Activated CD4-positive, alpha-beta T cell treated with anti-CD3 and anti-CD28 coated beads for 36 hours (primary cell): ENCODE measurements at regions of chr9 and their contacts with region 1.

Region 1: DNA sequence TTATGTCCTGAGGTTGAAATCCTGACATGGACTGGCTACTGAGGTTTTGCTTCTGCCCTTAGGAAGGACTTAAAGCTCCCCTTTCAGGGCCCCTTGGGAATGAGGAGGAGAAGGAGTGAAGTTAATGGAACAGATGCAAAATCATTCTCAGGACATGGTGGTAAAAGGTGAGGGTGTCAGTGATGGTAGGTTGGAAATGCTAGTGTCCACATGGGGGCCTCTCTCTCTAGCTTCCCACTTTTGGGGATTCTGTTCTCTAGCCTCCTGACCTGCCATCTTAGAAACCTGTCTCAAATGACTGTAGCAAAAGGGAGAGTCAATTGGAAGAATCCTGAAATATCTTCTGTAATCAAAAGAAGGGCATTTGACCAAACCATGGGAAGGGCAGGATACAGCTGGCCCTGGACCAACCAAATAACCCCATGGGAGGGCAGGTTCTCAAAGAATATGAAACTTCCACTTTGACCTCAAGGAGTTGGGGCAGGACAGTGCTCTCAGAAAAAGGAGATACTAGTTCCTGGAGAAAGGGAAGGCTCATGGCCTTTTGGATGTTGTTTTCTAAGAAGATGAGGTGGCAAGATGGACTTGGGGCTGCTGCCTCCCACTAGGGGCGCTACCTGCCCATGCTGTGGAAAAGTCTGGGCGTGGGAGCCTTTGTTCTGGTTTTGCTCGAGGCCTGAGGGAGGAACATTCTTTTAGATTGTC is 21.2 kb upstream of the MLANA start:
- DNase-seq: peak; percentile 61
- ATAC-seq: peak; percentile 49
- H3K4me3 Mint-ChIP-seq: no peak overlapping the region
- H3K27ac Mint-ChIP-seq: peak overlapping the region; percentile 25
- H3K4me1 Mint-ChIP-seq: peaks cover 4% of the 10 kb centered on the region
- H3K27me3 Mint-ChIP-seq: no peaks in the 10 kb centered on the region

Region 2: DNA sequence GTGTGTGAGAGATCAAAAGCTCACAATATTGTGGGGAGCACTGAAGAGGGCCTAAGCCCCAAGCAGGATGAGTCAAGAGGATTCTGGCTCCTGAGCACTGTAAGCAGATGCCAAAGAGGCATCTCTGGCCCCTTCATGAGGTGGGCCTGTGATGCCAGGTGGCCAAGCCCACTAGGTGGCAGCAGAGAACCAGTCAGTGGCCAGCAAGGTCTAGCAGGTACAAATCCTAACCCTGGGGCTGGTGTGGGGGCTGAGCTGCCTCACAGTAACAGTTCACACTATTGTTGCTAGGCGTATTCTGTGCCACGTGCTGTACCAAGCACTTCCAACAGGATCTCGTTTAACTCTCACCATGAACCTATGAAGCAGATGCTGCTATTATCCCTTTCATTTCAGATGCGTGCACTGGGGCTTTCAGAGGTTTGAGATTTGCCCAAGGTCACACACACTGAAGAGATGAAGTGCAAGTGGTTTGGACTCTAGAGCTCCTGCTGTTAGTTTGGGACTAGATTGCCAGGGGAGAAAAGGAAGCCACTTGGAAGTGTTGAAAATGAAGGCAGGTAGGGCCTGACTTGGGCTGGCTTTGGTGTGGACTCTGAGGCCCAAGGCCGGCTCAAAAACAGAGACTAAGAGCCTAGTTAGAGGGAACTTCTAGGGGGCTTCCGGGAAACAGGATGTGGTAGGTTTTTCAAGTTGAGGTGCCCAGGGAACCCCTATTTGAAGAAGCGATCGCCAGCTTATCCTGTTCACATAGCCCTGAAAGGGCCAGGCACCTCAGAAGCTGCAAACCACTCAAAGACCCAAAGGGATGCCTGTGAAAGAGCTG is 16.9 kb after region 1 on chr9:
- CTCF ChIA-PET with region 1: interaction called, 10 read pairs
- POLR2A ChIA-PET with region 1: no interaction called
- intact Hi-C with region 1: no loop called
- DNase-seq: peak; percentile 92
- ATAC-seq: peak; percentile 100
- H3K4me3 Mint-ChIP-seq: no peak overlapping the region
- H3K27ac Mint-ChIP-seq: no peak overlapping the region
- H3K4me1 Mint-ChIP-seq: peaks cover 5% of the 10 kb centered on the region
- H3K27me3 Mint-ChIP-seq: no peaks in the 10 kb centered on the region

Region 3: DNA sequence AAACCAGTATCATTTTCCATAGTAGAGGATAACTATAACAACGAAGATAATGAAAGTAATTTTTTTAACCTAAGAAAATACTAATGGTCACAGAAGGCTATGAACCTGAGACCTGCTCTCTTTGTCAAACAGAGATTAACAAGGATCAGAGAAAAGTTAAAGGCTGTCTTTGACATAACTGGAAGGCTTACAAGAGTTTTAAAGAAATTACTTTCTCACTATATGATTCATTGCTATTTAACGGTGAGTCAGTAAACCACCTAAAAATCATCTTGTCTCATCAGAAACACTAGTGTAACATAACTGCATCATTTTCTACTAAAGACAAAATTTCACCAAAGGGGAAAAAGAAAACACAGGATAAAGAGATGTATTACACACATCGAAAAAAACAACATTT is 40.5 kb after region 1 on chr9:
- CTCF ChIA-PET with region 1: no interaction called
- POLR2A ChIA-PET with region 1: no interaction called
- intact Hi-C with region 1: no loop called
- DNase-seq: no peak
- ATAC-seq: peak; percentile 80
- H3K4me3 Mint-ChIP-seq: peak overlapping the region; percentile 50
- H3K27ac Mint-ChIP-seq: peak overlapping the region; percentile 92
- H3K4me1 Mint-ChIP-seq: peaks cover 18% of the 10 kb centered on the region
- H3K27me3 Mint-ChIP-seq: no peaks in the 10 kb centered on the region

Region 4: GRCh38 chr9:6367128-6367890 is 497.8 kb after region 1 on chr9:
- CTCF ChIA-PET with region 1: no interaction called
- POLR2A ChIA-PET with region 1: no interaction called
- intact Hi-C with region 1: no loop called
- DNase-seq: no peak
- ATAC-seq: no peak
- H3K4me3 Mint-ChIP-seq: no peak overlapping the region
- H3K27ac Mint-ChIP-seq: no peak overlapping the region
- H3K4me1 Mint-ChIP-seq: no peaks in the 10 kb centered on the region
- H3K27me3 Mint-ChIP-seq: no peaks in the 10 kb centered on the region